Panc1 (cell line): ENCODE measurements at regions of chr12 and their contacts with region 1.

Region 1: DNA sequence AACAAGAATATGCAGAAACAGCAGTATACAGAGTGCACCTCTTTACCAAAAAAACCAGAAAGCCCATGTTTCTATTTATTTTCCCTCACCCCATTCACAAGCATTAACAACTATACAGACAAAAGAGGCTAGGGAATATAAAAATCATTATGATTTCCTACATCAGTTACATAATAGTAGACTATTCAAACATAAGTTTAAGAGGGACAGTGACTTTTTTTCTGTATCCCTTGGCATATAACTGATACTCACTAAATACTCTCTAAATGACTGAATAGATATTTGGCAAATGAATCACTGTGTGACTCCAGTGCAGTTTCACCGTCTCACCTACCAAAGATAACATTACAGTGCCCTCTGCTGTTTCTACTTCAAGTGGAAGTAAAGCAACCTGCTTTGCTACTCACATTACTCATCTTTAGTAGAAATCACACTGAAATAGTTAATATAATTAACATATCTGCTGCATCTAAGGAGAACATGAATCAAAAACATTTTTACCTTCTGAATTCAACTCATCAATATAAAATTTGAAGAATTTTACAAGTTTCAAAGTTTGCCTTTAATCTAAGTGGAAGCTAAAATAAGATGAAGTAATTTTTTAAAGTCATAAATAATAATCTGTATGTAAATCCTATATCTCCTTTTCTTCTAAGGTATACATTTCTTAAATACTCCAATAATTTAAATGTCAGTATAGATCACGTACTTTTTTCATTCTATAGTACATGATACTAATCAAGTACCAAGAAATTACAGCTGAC is 103.8 kb downstream of the OSBPL8 start:
- DNase-seq: peak; percentile 84
- ATAC-seq: peak; percentile 99
- H3K4me3 ChIP-seq: no peak overlapping the region
- H3K27ac ChIP-seq: peak overlapping the region; percentile 55
- H3K4me1 ChIP-seq: peaks cover 8% of the 10 kb centered on the region
- H3K27me3 ChIP-seq: no peaks in the 10 kb centered on the region
- CTCF ChIP-seq: peak; percentile 72; the same call in 1 of the 2 replicates

Region 2: DNA sequence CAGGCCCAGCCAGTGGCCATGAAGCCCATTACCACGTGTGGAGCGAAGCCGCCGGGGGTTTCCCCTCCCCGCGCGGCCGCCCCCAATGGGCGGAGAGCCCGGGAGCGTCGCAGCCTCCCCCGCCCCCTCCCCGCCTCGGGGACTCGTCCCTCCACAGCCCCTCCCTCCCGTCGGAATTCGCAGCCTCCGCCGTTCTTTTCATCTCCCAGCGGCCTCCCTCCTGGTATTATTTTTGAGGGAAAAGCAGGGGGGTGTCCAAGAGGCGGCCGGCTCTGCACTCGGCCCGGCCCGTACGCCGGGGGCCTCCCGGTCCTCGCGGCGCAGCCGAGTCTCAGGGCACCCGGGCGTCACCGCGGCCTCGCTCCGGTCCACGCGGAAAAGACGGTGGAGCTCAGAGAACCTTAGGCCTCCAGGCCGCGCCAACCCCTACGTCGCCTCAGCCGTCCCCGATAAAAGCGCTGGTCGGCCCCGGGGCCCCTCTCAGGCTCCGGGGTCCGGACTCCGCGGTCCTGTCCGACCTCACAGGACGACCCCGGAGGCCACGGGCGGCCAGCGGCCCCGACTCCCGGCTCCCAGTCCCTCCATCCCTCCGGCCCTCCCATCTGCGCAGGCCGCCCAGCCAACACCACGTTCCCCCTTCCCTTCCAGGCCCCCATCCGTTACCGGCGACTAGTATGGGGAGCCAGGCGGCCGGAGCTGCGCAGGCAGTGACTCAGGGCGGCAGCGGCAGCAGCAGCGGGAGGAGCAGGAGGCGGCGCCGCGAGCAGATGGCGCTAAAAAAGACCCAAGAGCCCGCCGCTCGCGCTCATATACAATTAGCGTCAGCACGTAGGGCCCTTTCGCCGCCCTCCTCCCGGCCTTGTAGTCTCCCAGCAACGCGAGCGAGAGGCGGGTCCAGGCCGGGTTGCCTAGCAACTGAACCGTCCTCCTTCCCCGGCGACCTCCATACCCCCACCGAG is 371.6 kb before region 1 on chr12 and contains the start of gene NAP1L1:
- CTCF ChIA-PET with region 1: no interaction called
- POLR2A ChIA-PET with region 1: no interaction called
- in situ Hi-C with region 1: no loop called
- intact Hi-C with region 1: loop called (anchors 10 kb)
- DNase-seq: peak; percentile 69
- ATAC-seq: peak; percentile 97
- H3K4me3 ChIP-seq: peak within 1 kb of the TSS; percentile 61 to 96
- H3K27ac ChIP-seq: peak within 1 kb of the TSS; percentile 90
- H3K4me1 ChIP-seq: peaks cover 26% of the 10 kb centered on the region
- H3K27me3 ChIP-seq: no peaks in the 10 kb centered on the region
- CTCF ChIP-seq: no peak
- total RNA-seq, gene NAP1L1: 620 TPM

Region 3: GRCh38 chr12:76348079-76348901 is 107.5 kb before region 1 on chr12 and contains the start of gene BBS10:
- CTCF ChIA-PET with region 1: no interaction called
- POLR2A ChIA-PET with region 1: no interaction called
- in situ Hi-C with region 1: no loop called
- intact Hi-C with region 1: loop called (anchors 5 kb)
- DNase-seq: no peak
- ATAC-seq: peak; percentile 98
- H3K4me3 ChIP-seq: peak within 1 kb of the TSS; percentile 60 to 85
- H3K27ac ChIP-seq: peak within 1 kb of the TSS; percentile 85
- H3K4me1 ChIP-seq: peaks cover 16% of the 10 kb centered on the region
- H3K27me3 ChIP-seq: no peaks in the 10 kb centered on the region
- CTCF ChIP-seq: peak; percentile 74
- total RNA-seq, gene BBS10: 7.8 TPM

Region 4: DNA sequence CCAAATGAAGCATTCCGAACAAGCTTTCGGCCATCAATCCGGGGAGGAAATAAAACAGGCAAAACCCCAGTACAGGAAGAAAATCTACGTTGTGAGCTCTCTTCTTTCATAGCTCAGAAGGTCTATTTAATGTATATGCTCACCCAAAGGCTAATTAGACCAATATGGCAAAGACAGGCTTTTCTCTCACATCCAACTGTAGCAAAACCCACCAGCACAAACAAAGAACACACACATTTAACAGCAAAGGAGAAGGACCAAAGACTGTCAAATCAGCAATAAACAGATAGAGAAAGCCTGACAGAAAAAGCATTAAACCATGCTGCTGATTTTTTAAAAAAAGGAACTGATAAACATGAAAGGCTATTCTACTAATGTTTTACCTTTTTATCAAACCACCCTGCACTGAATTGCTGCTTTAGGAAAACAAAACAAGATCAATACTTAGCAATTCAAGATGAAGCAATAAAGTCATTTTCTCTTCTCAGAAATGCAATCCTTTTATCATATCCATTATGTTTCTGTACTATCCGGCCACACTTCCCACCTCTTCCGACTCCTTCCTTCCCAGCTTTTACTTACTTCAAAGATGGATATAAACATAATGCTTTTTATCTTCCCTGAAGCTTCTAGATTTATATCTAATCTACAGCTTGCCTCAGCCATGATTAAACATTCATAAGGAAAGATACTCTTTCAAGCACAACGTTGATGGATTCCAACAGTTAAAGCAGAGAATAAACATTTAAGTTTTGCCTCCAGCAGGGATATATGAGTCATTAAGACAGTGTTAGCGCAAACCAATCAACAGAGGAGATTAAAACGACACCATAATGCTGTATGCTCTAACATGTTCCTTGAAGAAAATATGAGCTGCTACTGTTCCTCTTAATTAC is 33.0 kb before region 1 on chr12:
- CTCF ChIA-PET with region 1: no interaction called
- POLR2A ChIA-PET with region 1: interaction called, 10 read pairs
- in situ Hi-C with region 1: no loop called
- intact Hi-C with region 1: no loop called
- DNase-seq: peak; percentile 7
- ATAC-seq: peak; percentile 96
- H3K4me3 ChIP-seq: peak overlapping the region; percentile 19 to 35
- H3K27ac ChIP-seq: peak overlapping the region; percentile 71
- H3K4me1 ChIP-seq: peaks cover 18% of the 10 kb centered on the region
- H3K27me3 ChIP-seq: no peaks in the 10 kb centered on the region
- CTCF ChIP-seq: no peak

Region 5: DNA sequence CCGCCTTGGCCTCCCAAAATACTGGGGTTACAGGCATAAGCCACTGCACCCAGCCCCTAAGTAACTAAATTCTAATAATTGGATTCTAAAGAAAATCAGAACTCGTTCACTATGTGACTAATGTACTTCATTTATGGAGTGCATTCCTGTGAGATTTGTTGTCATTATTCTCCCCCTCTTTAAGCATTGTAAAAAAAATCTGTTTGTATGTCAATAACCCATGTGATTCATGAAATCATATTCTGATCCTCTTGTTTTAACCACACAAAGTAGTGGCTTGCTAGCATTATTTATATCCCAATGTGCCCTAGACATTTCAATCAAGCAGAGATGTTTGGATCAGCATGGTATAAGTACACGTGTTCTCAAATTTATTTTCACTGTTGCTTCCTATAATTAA is 182.0 kb after region 1 on chr12:
- CTCF ChIA-PET with region 1: no interaction called
- POLR2A ChIA-PET with region 1: no interaction called
- in situ Hi-C with region 1: no loop called
- intact Hi-C with region 1: no loop called
- DNase-seq: no peak
- ATAC-seq: peak; percentile 53; the same call in 1 of the 2 replicates
- H3K4me3 ChIP-seq: no peak overlapping the region
- H3K27ac ChIP-seq: no peak overlapping the region
- H3K4me1 ChIP-seq: no peaks in the 10 kb centered on the region
- H3K27me3 ChIP-seq: no peaks in the 10 kb centered on the region
- CTCF ChIP-seq: no peak

Region 6: DNA sequence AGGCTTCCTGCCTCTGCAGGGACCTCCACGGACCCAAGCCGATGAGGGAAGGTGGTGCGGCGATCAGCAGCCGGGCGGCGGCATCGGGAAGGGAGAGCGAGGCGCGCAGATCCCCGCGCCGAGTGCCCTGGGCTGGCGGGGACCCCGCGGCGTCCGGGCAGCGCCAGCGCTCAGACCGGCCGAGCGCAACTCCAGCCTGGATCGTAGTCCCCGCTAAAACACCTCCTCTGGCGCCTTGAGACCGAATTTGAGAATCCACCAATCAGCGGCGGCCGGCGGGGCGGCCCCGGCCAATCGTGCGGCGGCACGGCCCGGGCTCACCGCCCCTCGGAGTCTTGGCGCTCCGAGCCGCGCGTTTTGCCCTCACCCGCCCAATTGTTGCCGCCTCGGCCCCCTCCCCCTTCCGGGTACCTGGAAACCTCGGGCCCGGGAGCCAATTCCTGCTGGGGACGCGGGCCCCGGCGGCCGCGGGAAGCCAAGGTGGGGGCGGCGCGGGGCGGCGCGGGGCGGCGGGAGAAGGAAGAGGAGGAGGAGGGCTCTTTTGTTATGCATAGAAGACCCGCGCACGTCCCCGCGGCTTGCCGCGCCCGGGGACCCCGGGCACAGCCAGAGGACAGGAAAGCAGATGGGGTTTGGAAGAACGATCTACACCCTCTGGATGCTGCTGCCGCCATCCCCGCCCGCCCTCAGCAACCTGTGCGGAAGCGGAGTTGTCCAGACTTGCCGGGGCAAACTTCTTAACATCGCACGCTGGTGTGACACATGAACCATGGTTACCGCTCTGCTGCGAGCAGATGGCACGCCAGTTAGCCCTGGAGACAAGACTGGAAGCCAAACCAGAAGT is 609.8 kb after region 1 on chr12 and contains the start of gene E2F7:
- CTCF ChIA-PET with region 1: no interaction called
- POLR2A ChIA-PET with region 1: no interaction called
- in situ Hi-C with region 1: no loop called
- intact Hi-C with region 1: no loop called
- DNase-seq: peak; percentile 57
- ATAC-seq: peak; percentile 97
- H3K4me3 ChIP-seq: peak within 1 kb of the TSS; percentile 76 to 86
- H3K27ac ChIP-seq: peak within 1 kb of the TSS; percentile 85
- H3K4me1 ChIP-seq: peaks cover 20% of the 10 kb centered on the region
- H3K27me3 ChIP-seq: no peaks in the 10 kb centered on the region
- CTCF ChIP-seq: no peak
- total RNA-seq, gene E2F7: 13.1 TPM